MCF 10A (cell line): ENCODE measurements at regions of chr1 and their contacts with region 1.

Region 1: DNA sequence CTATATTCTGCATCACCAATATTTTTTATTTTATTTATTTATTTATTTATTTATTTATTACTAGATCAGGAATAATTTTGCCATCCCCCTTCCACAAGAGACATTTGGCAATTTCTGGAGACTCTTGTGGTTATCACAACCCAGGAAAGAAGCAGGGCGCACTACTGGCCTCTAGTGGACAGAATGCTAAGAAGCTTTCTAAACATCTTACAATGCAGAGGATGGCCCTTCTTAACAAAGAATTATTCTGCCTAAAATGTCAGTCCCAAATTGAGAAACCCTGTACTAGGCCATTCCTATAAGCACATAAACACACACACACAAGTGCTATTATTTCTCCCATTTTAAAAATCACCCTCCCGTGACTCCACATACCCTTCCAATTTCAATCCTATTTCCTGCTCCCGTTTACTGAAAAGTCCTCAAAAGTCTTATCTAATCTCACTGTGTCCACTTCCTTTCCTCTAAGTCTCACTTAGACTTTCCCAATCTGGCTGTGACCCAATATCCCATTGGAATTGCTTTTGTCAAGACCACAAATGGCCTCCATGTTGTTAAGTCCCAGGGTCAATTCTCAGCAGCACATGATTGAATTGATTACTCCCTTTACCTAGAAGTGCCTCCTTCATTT is 43.7 kb upstream of the RNF11 start:
- DNase-seq: peak; percentile 79
- H3K4me3 Mint-ChIP-seq: no peak overlapping the region
- H3K27ac Mint-ChIP-seq: no peak overlapping the region
- H3K4me1 Mint-ChIP-seq: no peaks in the 10 kb centered on the region
- H3K27me3 Mint-ChIP-seq: no peaks in the 10 kb centered on the region
- CTCF ChIP-seq: peak; percentile 68

Region 2: GRCh38 chr1:50620680-50621329 is 571.5 kb before region 1 on chr1:
- CTCF ChIA-PET with region 1: interaction called, 11 read pairs
- POLR2A ChIA-PET with region 1: no interaction called
- intact Hi-C with region 1: loop called (anchors 1 kb)
- DNase-seq: peak; percentile 78
- H3K4me3 Mint-ChIP-seq: peak overlapping the region; percentile 58
- H3K27ac Mint-ChIP-seq: peak overlapping the region; percentile 70
- H3K4me1 Mint-ChIP-seq: peaks cover 9% of the 10 kb centered on the region
- H3K27me3 Mint-ChIP-seq: no peaks in the 10 kb centered on the region
- CTCF ChIP-seq: peak; percentile 67

Region 3: DNA sequence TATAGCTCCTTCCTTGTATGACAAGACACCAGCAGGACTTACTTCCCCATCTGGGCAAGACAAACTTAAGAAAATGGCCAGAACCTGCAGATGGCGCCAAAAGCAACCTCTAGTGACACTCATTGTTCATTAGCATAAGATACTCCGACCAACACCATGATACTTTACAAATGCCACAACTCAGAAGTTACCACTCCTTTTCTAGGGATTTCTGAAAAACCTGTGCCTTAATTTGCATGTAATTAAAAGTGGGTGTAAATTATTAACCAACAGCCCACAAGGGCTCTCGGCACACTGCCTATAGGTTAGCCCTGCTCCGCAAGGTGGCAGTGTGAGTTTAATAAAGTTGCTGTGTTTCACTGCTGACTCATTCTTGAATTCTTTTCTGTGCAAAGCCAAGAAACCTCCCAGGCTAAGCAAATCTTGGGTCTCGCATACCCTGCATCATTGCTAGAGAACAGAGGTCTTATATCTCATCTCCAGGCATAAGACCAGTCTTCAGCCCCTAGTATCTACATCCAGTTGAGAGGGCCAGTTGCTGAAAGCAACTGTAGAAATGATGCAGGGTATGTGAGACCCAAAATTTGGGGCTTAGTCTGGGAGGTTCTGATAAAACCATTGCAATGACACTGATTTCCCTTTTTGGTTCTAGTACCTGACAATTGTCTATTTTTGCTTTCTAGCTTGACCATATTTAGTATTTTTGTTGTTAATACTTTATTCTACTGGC is 318.7 kb before region 1 on chr1:
- CTCF ChIA-PET with region 1: interaction called, 62 read pairs
- POLR2A ChIA-PET with region 1: no interaction called
- intact Hi-C with region 1: loop called (anchors 1 kb)
- DNase-seq: peak; percentile 84
- H3K4me3 Mint-ChIP-seq: peak overlapping the region; percentile 67
- H3K27ac Mint-ChIP-seq: peak overlapping the region; percentile 27
- H3K4me1 Mint-ChIP-seq: no peaks in the 10 kb centered on the region
- H3K27me3 Mint-ChIP-seq: no peaks in the 10 kb centered on the region
- CTCF ChIP-seq: peak; percentile 78

Region 4: DNA sequence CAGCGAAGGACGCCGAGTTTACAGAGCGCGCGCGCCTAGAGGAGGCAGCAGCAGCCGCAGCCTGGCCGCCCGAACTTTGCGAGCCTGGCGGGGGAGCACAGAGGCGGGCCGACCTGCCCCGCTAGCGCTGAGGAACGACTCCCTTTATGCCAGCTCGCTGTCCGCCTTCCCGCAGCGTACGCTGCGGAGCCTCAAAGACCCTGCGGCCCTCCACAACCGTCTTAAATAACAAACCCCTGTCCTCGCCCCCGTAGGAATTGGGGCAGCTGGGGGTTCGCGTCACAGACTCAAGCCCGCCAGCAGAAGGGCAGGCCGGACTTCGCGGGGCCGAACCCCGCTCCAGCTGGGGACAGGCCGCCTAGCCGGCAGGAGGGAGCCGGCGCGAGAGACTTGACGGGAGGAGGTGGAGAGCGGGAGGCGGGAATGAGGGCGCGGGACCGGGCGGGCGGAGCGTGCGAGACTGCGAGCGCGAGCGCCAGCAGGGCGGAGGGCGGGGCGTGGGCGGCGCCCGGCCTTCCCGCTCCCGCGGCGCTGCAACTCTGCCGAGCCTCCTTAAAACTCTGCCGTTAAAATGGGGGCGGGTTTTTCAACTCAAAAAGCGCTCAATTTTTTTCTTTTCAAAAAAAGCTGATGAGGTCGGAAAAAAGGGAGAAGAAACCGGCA is 224.0 kb before region 1 on chr1:
- CTCF ChIA-PET with region 1: interaction called, 9 read pairs
- POLR2A ChIA-PET with region 1: interaction called, 12 read pairs
- intact Hi-C with region 1: loop called (anchors 10 kb)
- DNase-seq: peak; percentile 91
- H3K4me3 Mint-ChIP-seq: peak overlapping the region; percentile 86
- H3K27ac Mint-ChIP-seq: peak overlapping the region; percentile 95
- H3K4me1 Mint-ChIP-seq: peaks cover 8% of the 10 kb centered on the region
- H3K27me3 Mint-ChIP-seq: no peaks in the 10 kb centered on the region
- CTCF ChIP-seq: peak; percentile 42

Region 5: GRCh38 chr1:51139474-51139873 is 52.9 kb before region 1 on chr1:
- CTCF ChIA-PET with region 1: interaction called, 5 read pairs
- POLR2A ChIA-PET with region 1: no interaction called
- intact Hi-C with region 1: loop called (anchors 1 kb)
- DNase-seq: no peak
- H3K4me3 Mint-ChIP-seq: peak overlapping the region; percentile 18
- H3K27ac Mint-ChIP-seq: no peak overlapping the region
- H3K4me1 Mint-ChIP-seq: no peaks in the 10 kb centered on the region
- H3K27me3 Mint-ChIP-seq: no peaks in the 10 kb centered on the region
- CTCF ChIP-seq: peak; percentile 15

Region 6: GRCh38 chr1:51214615-51215131 is 22.3 kb after region 1 on chr1:
- CTCF ChIA-PET with region 1: interaction called, 20 read pairs
- POLR2A ChIA-PET with region 1: no interaction called
- intact Hi-C with region 1: no loop called
- DNase-seq: peak; percentile 35
- H3K4me3 Mint-ChIP-seq: no peak overlapping the region
- H3K27ac Mint-ChIP-seq: no peak overlapping the region
- H3K4me1 Mint-ChIP-seq: no peaks in the 10 kb centered on the region
- H3K27me3 Mint-ChIP-seq: no peaks in the 10 kb centered on the region
- CTCF ChIP-seq: no peak

Region 7: DNA sequence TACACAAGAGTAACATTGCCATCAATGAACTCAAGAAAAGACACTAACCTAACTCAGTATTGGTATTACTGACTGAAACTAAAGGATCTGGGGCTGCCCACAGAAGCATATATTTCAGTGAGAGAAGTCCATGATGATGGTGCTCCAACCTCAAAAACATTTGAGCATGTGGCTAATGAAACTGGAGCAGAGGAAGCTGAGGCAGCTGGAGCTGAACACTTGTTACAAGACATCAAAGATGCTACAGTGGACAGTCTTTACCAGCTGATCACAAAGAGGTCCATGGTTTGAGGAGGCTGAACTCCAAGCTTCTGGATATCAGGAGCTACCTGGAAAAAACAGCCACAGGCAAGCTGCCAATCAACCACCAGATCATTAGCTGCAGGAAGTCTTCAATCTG is 180.2 kb after region 1 on chr1:
- CTCF ChIA-PET with region 1: no interaction called
- POLR2A ChIA-PET with region 1: no interaction called
- intact Hi-C with region 1: no loop called
- DNase-seq: no peak
- H3K4me3 Mint-ChIP-seq: no peak overlapping the region
- H3K27ac Mint-ChIP-seq: no peak overlapping the region
- H3K4me1 Mint-ChIP-seq: no peaks in the 10 kb centered on the region
- H3K27me3 Mint-ChIP-seq: no peaks in the 10 kb centered on the region
- CTCF ChIP-seq: no peak